GM10248 (cell line): ENCODE measurements at regions of chr16 and their contacts with region 1.

Region 1: GRCh38 chr16:71883849-71884638 is at the start of gene ZNF821:
- DNase-seq: peak; percentile 86
- CTCF ChIP-seq: no peak

Region 2: GRCh38 chr16:71808593-71809459 is 75.2 kb before region 1 on chr16 and contains the start of gene AP1G1:
- CTCF ChIA-PET with region 1: interaction called, 12 read pairs
- POLR2A ChIA-PET with region 1: no interaction called
- DNase-seq: peak; percentile 94
- CTCF ChIP-seq: no peak

Region 3: DNA sequence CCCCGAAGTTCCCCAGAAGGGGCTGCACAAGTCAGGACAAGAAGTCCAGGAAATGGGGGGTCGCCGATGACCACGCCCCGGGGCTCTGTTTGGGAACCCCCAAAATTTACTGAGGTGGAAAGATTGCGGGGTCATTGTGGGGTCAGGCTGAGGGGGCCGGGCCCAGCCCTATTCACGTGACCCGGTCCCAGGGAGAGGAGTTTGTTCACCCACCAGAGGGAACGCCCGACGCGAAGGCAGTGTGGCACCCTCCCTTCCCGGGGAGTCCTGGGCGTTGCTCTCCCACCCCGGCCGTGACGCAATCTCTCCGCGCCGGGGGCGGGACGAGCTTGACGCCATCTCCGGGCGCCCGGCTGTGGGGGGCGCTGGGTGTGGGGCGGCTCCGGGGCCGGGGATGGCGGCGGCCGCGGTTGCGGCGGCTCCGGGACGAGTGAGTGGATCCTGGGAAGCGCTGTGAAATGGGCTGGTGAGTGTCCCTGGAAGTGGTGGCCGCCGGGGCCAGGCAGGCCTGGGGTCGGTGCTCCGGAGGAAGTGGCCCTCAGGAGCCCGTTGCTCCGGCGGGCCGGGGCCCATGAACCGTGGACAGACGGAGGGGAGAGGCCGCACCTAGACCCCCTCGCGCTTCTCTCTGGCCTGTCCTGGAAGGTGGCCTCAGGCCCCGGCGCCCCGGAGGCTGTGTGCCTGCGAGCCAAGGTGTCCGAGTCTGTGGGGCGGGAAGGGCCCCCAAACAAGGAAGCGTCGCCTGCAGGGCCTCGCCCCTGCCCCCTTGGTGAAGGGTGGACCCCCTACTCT is 38.2 kb before region 1 on chr16 and contains the start of gene ATXN1L:
- CTCF ChIA-PET with region 1: interaction called, 22 read pairs
- POLR2A ChIA-PET with region 1: no interaction called
- DNase-seq: peak; percentile 97
- CTCF ChIP-seq: no peak

Region 4: GRCh38 chr16:71865173-71865863 is 18.7 kb before region 1 on chr16:
- CTCF ChIA-PET with region 1: interaction called, 91 read pairs
- POLR2A ChIA-PET with region 1: interaction called, 3 read pairs
- DNase-seq: no peak
- CTCF ChIP-seq: no peak

Region 5: DNA sequence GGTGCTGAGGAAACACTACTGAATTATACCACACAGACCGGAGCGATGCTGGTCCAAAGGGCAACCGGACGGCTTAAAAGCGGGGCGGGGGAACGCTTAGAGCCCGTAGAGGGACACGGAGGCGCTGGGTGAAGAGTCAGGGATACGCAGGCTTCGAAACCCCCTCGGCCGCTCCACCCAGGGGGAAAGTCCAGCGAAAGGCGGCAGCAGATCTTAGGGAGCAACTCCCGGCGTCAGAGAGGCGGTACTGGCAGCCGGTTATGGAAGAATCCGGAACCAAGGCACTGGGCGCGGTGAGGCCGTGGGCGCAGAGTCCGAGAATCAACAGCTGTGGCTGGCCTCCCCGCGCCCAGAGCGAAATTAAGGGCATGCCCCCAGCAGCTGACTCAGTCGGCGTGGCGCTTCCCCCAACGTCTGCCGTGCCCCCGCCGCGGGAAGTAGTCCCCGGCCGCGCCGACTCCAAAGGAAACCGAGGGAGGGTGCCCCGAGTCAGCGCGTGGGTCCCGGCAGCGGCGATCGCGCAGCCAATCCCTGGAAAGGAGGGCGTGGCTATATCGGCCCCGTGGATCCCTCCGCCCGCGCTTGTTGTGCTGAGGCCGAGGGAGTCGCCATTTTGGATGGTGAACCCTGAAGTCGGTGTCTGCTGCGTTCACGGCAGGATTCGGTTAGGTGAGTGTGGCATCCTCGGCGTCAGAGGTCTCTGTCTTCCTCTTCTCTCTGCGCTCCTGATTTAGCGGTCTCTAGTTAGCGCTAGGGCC is 11.1 kb after region 1 on chr16 and contains the start of gene IST1:
- CTCF ChIA-PET with region 1: interaction called, 76 read pairs
- POLR2A ChIA-PET with region 1: interaction called, 6 read pairs
- DNase-seq: peak; percentile 97
- CTCF ChIP-seq: no peak

Region 6: GRCh38 chr16:71919035-71919434 is 35.0 kb after region 1 on chr16:
- CTCF ChIA-PET with region 1: interaction called, 12 read pairs
- POLR2A ChIA-PET with region 1: no interaction called
- DNase-seq: peak; percentile 55
- CTCF ChIP-seq: no peak